ENCODE measurements at regions of chr11 and their contacts with region 1.

Region 1: GRCh38 chr11:32893343-32894148 is 935 bp downstream of the QSER1 start:
- DNase-seq: peak; percentile 63
- H3K4me3 Mint-ChIP-seq: peak overlapping the region; percentile 97
- H3K27ac Mint-ChIP-seq: peak overlapping the region; percentile 96
- H3K4me1 Mint-ChIP-seq: peaks cover 42% of the 10 kb centered on the region
- H3K27me3 Mint-ChIP-seq: no peaks in the 10 kb centered on the region

Region 2: GRCh38 chr11:32583459-32584271 is 309.9 kb before region 1 on chr11 and contains the start of gene EIF3M:
- CTCF ChIA-PET with region 1: no interaction called
- intact Hi-C with region 1: loop called (anchors 1 kb)
- DNase-seq: peak; percentile 97
- H3K4me3 Mint-ChIP-seq: peak within 1 kb of the TSS; percentile 95
- H3K27ac Mint-ChIP-seq: peak within 1 kb of the TSS; percentile 94
- H3K4me1 Mint-ChIP-seq: peaks cover 38% of the 10 kb centered on the region
- H3K27me3 Mint-ChIP-seq: no peaks in the 10 kb centered on the region
- total RNA-seq, gene EIF3M: 342 to 358 TPM

Region 3: GRCh38 chr11:32829680-32830412 is 63.7 kb before region 1 on chr11 and contains the start of gene PRRG4:
- CTCF ChIA-PET with region 1: no interaction called
- intact Hi-C with region 1: loop called (anchors 1 kb)
- DNase-seq: peak; percentile 66
- H3K4me3 Mint-ChIP-seq: peak within 1 kb of the TSS; percentile 87
- H3K27ac Mint-ChIP-seq: no peak within 1 kb of the TSS
- H3K4me1 Mint-ChIP-seq: peaks cover 6% of the 10 kb centered on the region
- H3K27me3 Mint-ChIP-seq: peaks cover 35% of the 10 kb centered on the region
- total RNA-seq, gene PRRG4: 0.15 to 0.19 TPM

Region 4: GRCh38 chr11:33039274-33040032 is 145.9 kb after region 1 on chr11 and contains the start of gene TCP11L1:
- CTCF ChIA-PET with region 1: interaction called, 3 read pairs
- intact Hi-C with region 1: loop called (anchors 1 kb)
- DNase-seq: peak; percentile 88
- H3K4me3 Mint-ChIP-seq: peak within 1 kb of the TSS; percentile 85
- H3K27ac Mint-ChIP-seq: peak within 1 kb of the TSS; percentile 92
- H3K4me1 Mint-ChIP-seq: peaks cover 25% of the 10 kb centered on the region
- H3K27me3 Mint-ChIP-seq: no peaks in the 10 kb centered on the region
- total RNA-seq, gene TCP11L1: 4.8 to 5.7 TPM

Region 5: GRCh38 chr11:33257897-33258630 is 364.5 kb after region 1 on chr11:
- CTCF ChIA-PET with region 1: no interaction called
- intact Hi-C with region 1: loop called (anchors 1 kb)
- DNase-seq: peak; percentile 77
- H3K4me3 Mint-ChIP-seq: peak overlapping the region; percentile 91
- H3K27ac Mint-ChIP-seq: peak overlapping the region; percentile 93
- H3K4me1 Mint-ChIP-seq: peaks cover 37% of the 10 kb centered on the region
- H3K27me3 Mint-ChIP-seq: no peaks in the 10 kb centered on the region

Region 6: GRCh38 chr11:34143048-34143447 is 1249.5 kb after region 1 on chr11:
- CTCF ChIA-PET with region 1: no interaction called
- intact Hi-C with region 1: no loop called
- DNase-seq: no peak
- H3K4me3 Mint-ChIP-seq: no peak overlapping the region
- H3K27ac Mint-ChIP-seq: no peak overlapping the region
- H3K4me1 Mint-ChIP-seq: no peaks in the 10 kb centered on the region
- H3K27me3 Mint-ChIP-seq: no peaks in the 10 kb centered on the region

Measured in activated naive CD4-positive, alpha-beta T cell treated with anti-CD3 and anti-CD28 coated beads for 36 hours (primary cell).